ENCODE measurements at regions of chrX and their contacts with region 1.

Region 1: DNA sequence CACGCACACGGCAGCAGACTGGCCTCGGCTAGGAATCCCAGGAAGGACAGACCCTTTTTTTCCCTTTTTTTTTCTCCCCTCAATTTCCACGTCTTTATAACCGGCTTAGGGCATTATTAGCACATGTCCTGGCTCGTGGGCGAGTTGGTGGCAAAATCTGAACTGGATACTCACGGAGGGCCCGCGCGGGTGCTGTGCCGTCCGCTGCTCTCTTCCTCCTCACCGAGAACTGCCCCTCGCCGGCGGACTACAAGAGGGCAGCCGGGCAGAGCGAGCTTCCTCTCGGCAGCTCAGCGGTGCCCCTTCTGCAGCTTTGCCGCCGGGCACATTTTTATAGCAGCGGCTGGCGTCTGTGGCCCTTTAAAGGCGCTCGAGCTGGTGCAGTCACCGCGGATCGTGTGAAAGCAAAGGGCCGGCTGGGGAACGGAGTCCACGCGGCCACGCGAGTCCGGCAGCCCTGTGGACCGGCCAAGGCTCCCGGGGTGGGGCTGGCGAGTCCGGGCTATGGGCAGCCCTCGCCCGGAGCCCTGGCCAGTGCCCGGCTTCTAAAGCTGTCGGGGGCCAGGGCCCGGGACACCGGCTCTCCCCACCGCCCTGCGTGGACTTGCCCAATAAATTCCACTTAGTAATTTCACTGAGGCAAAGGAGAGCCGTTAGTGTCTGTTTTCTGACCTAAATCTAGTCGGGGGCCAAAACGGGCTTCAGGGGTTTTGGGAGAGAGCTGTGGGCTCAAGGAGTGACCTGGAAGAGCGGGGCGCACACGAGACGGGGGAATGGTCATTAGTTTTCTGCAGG is 1.3 kb upstream of the CITED1 start:
- DNase-seq: peak; percentile 78
- H3K4me3 ChIP-seq: peak overlapping the region; percentile 38
- H3K27ac ChIP-seq: no peak overlapping the region
- H3K4me1 ChIP-seq: no peaks in the 10 kb centered on the region
- H3K27me3 ChIP-seq: peaks cover 94% of the 10 kb centered on the region
- CTCF ChIP-seq: no peak

Region 2: DNA sequence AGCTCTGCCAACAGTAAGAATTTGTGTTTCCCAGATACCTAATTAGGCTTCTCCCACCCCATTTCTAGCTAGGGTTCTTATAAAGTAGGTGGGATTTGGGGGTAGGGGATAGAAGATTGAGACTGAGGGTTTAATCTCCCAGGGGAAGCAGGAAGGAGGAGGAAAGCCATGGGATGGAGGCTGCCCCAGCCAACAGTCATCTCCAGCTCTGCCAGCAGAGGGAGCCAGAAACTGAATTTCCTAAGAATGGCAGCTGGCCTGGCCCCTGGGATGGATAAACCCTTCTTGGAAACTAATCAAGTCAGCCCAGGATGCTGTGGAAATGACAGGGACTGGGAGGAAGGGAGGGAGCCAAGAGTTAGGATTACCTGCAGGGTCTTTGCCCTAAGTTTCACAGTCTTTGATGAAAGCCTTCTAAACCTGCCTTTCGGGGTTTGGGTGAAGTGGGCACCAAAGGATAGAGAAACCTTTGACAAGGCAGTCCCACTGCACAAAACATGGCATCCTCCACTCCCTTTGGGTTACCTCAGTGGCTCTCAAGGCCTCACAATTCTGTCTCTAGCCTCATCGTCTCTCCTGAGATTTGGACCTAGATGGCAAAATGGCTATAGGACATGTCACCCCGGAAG is 61.5 kb before region 1 on chrX:
- CTCF ChIA-PET with region 1: no interaction called
- POLR2A ChIA-PET with region 1: no interaction called
- intact Hi-C with region 1: loop called (anchors 5 kb)
- DNase-seq: peak; percentile 82
- H3K4me3 ChIP-seq: no peak overlapping the region
- H3K27ac ChIP-seq: no peak overlapping the region
- H3K4me1 ChIP-seq: peaks cover 12% of the 10 kb centered on the region
- H3K27me3 ChIP-seq: no peaks in the 10 kb centered on the region
- CTCF ChIP-seq: peak; percentile 89

Region 3: DNA sequence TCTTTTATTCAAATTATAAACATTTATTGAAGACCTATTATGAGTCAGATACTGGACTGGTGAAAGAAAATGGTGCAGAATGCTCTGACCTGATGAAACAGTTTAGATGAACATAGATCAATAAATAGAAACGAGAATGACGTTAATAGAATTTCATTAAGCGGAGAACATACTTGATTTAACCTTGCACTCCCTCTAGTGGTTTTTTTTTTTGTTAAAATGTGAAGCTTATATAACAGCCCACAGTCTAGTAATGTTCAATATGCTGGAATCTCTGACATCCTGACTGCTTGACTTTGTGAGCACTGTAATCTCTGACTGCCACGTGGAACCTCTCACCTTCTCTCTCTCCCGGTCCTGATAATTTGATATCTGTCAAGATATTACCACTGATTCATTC is 233.3 kb after region 1 on chrX:
- CTCF ChIA-PET with region 1: no interaction called
- POLR2A ChIA-PET with region 1: no interaction called
- intact Hi-C with region 1: loop called (anchors 10 kb)
- DNase-seq: peak; percentile 40
- H3K4me3 ChIP-seq: no peak overlapping the region
- H3K27ac ChIP-seq: no peak overlapping the region
- H3K4me1 ChIP-seq: no peaks in the 10 kb centered on the region
- H3K27me3 ChIP-seq: no peaks in the 10 kb centered on the region
- CTCF ChIP-seq: peak; percentile 56